ENCODE measurements at regions of chr1 and their contacts with region 1.

Region 1: GRCh38 chr1:173429471-173430402 is 47.4 kb upstream of the PRDX6 start:
- DNase-seq: peak; percentile 44 to 78 (median 58)
- ATAC-seq: peak; percentile 85
- H3K4me3 ChIP-seq: peak overlapping the region; percentile 16
- H3K4me3 Mint-ChIP-seq: peak overlapping the region; percentile 38
- H3K27ac ChIP-seq: no peak overlapping the region
- H3K27ac Mint-ChIP-seq: peak overlapping the region; percentile 6
- H3K4me1 ChIP-seq: peaks cover 13% of the 10 kb centered on the region
- H3K4me1 Mint-ChIP-seq: peaks cover 23% of the 10 kb centered on the region
- H3K27me3 ChIP-seq: no peaks in the 10 kb centered on the region
- H3K27me3 Mint-ChIP-seq: no peaks in the 10 kb centered on the region
- CTCF ChIP-seq: peak; percentile 71

Region 2: GRCh38 chr1:173476664-173477285 is 47.0 kb after region 1 on chr1:
- CTCF ChIA-PET with region 1: interaction called, 14 read pairs
- POLR2A ChIA-PET with region 1: interaction called, 11 read pairs
- intact Hi-C with region 1: loop called (anchors 1 kb)
- DNase-seq: peak; percentile 53 to 91 (median 75)
- ATAC-seq: peak; percentile 79
- H3K4me3 ChIP-seq: peak overlapping the region; percentile 84
- H3K4me3 Mint-ChIP-seq: peak overlapping the region; percentile 93
- H3K27ac ChIP-seq: peak overlapping the region; percentile 48 to 89
- H3K27ac Mint-ChIP-seq: peak overlapping the region; percentile 82
- H3K4me1 ChIP-seq: peaks cover 32% of the 10 kb centered on the region
- H3K4me1 Mint-ChIP-seq: peaks cover 72% of the 10 kb centered on the region
- H3K27me3 ChIP-seq: no peaks in the 10 kb centered on the region
- H3K27me3 Mint-ChIP-seq: no peaks in the 10 kb centered on the region
- CTCF ChIP-seq: no peak

Region 3: GRCh38 chr1:173714759-173715537 is 285.2 kb after region 1 on chr1 and contains the start of gene KLHL20:
- CTCF ChIA-PET with region 1: no interaction called
- POLR2A ChIA-PET with region 1: no interaction called
- intact Hi-C with region 1: loop called (anchors 1 to 5 kb)
- DNase-seq: peak; percentile 70 to 94 (median 81)
- ATAC-seq: peak; percentile 97
- H3K4me3 ChIP-seq: peak within 1 kb of the TSS; percentile 63
- H3K4me3 Mint-ChIP-seq: peak within 1 kb of the TSS; percentile 97
- H3K27ac ChIP-seq: peak within 1 kb of the TSS; percentile 73 to 81
- H3K27ac Mint-ChIP-seq: peak within 1 kb of the TSS; percentile 91
- H3K4me1 ChIP-seq: peaks cover 8% of the 10 kb centered on the region
- H3K4me1 Mint-ChIP-seq: peaks cover 36% of the 10 kb centered on the region
- H3K27me3 ChIP-seq: peaks cover 4 to 19% of the 10 kb centered on the region in 2 experiments
- H3K27me3 Mint-ChIP-seq: peaks cover 18% of the 10 kb centered on the region
- CTCF ChIP-seq: no peak
- total RNA-seq, gene KLHL20: 29.4 to 30.4 TPM

Region 4: DNA sequence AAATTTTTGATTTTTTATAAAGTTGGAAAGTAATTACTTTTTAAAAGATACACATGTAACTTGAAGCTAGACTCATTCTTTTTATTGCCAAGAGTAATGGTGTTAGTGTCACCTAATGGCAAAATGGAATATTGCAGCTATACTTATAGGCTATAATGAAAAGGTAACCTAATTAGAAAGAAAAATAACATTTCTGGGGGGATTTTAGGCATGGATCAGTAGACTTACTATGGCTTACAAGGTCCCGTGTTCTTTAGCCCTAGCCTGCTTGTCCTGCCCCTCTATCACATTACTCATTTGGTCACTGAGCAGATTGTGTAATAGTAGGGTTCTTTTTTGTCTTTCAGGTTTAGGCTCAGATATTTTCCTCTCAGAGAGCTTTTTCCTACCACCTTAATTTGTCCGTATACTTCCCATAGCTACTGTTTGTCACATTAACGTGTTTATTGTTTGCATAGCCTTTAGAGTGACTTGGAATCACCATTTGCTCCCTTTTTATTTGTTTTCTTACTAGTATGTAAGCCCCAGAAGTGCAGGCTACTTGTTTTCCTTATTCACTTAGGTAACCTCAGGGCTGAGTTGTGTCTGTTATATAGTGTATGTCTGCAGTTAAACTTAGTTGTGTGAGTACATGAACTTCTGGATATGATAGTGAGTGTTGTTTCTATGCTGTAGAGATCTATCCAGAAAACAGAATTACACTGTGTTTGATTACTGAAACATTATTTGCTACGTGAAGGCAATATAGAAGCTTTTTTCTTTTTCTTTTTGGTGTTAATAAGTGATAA is 788.2 kb after region 1 on chr1:
- CTCF ChIA-PET with region 1: no interaction called
- POLR2A ChIA-PET with region 1: no interaction called
- intact Hi-C with region 1: loop called (anchors 5 kb)
- DNase-seq: peak in 3 of 14 experiments; percentile 55 to 66 (median 65)
- ATAC-seq: peak; percentile 79
- H3K4me3 ChIP-seq: no peak overlapping the region
- H3K4me3 Mint-ChIP-seq: no peak overlapping the region
- H3K27ac ChIP-seq: no peak overlapping the region
- H3K27ac Mint-ChIP-seq: no peak overlapping the region
- H3K4me1 ChIP-seq: no peaks in the 10 kb centered on the region
- H3K4me1 Mint-ChIP-seq: no peaks in the 10 kb centered on the region
- H3K27me3 ChIP-seq: no peaks in the 10 kb centered on the region
- H3K27me3 Mint-ChIP-seq: no peaks in the 10 kb centered on the region
- CTCF ChIP-seq: peak; percentile 88